Activated CD4-positive, alpha-beta T cell treated with anti-CD3 and anti-CD28 coated beads, Interleukin-2, amount 10 ng/mL, durations not matched to agents 24 days and 14 days (primary cell): ENCODE measurements at regions of chr2 and their contacts with region 1.

Region 1: DNA sequence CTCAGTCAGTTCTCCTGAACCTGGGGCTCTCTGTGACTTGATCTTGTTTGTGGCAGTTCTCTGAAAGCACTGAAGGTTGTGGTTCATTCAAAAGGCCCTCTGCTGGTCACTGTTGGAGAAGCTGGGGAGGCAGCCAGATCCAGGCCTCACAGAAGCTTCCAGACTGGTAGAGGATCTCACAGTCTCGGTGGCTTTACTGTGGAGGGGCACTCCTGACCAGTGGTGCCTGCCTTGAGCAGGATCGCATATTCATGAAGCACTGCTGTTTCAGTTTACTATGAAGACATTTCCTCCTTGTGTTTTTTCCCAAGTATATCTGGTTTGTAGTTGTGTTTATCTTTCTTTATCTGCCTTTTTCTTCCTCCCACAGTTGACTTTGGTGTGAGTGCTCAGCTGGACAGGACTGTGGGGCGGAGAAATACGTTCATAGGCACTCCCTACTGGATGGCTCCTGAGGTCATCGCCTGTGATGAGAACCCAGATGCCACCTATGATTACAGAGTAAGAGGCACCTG is 133.9 kb downstream of the MAP4K4 start:
- DNase-seq: peak; percentile 88
- H3K4me3 Mint-ChIP-seq: peak overlapping the region; percentile 50
- H3K27ac Mint-ChIP-seq: peak overlapping the region; percentile 91
- H3K4me1 Mint-ChIP-seq: peaks cover 58% of the 10 kb centered on the region
- H3K27me3 Mint-ChIP-seq: no peaks in the 10 kb centered on the region

Region 2: GRCh38 chr2:101341901-101342624 is 489.3 kb before region 1 on chr2:
- intact Hi-C with region 1: loop called (anchors 5 kb)
- DNase-seq: peak; percentile 91
- H3K4me3 Mint-ChIP-seq: no peak overlapping the region
- H3K27ac Mint-ChIP-seq: peak overlapping the region; percentile 52
- H3K4me1 Mint-ChIP-seq: peaks cover 26% of the 10 kb centered on the region
- H3K27me3 Mint-ChIP-seq: peaks cover 5% of the 10 kb centered on the region

Region 3: GRCh38 chr2:101473911-101474701 is 357.3 kb before region 1 on chr2:
- intact Hi-C with region 1: loop called (anchors 2 kb)
- DNase-seq: peak; percentile 88
- H3K4me3 Mint-ChIP-seq: peak overlapping the region; percentile 84
- H3K27ac Mint-ChIP-seq: peak overlapping the region; percentile 92
- H3K4me1 Mint-ChIP-seq: peaks cover 37% of the 10 kb centered on the region
- H3K27me3 Mint-ChIP-seq: no peaks in the 10 kb centered on the region

Region 4: GRCh38 chr2:101667823-101668222 is 163.6 kb before region 1 on chr2:
- intact Hi-C with region 1: no loop called
- DNase-seq: no peak
- H3K4me3 Mint-ChIP-seq: no peak overlapping the region
- H3K27ac Mint-ChIP-seq: no peak overlapping the region
- H3K4me1 Mint-ChIP-seq: no peaks in the 10 kb centered on the region
- H3K27me3 Mint-ChIP-seq: no peaks in the 10 kb centered on the region

Region 5: GRCh38 chr2:101704046-101704466 is 127.4 kb before region 1 on chr2:
- intact Hi-C with region 1: loop called (anchors 2 kb)
- DNase-seq: peak; percentile 80
- H3K4me3 Mint-ChIP-seq: peak overlapping the region; percentile 59
- H3K27ac Mint-ChIP-seq: peak overlapping the region; percentile 90
- H3K4me1 Mint-ChIP-seq: peaks cover 59% of the 10 kb centered on the region
- H3K27me3 Mint-ChIP-seq: no peaks in the 10 kb centered on the region

Region 6: DNA sequence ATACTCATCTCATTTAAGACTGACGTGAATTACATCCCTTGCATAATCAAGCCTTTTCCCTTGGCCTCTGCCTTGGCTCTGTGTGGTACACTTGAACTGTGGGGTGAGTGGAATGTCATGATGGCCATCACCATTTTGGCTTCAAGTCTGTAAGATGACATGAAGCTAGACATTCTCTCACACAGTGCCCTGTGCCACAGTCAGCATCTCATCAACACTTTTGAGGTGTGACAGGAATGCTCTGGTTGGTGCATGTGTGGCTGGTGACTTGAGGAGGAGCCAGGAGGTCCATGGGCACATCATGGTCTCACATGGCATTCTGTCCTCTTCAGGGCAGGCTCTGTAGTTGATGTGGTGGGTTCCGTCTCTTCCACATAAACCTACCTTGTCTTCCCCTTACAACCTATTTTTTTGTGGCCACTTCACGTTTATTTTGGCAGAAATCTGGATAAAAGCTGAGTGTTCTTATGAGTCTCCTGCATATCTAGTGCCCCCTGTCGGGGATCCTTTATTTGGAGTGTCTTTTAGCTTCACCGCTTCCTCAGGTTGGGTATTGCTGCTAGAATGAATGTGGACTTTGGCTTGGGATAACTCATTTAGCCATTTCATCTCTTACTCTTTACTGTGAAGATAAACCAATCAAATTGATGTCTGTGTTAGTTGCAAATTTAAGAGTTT is 105.8 kb before region 1 on chr2:
- intact Hi-C with region 1: no loop called
- DNase-seq: peak; percentile 66
- H3K4me3 Mint-ChIP-seq: no peak overlapping the region
- H3K27ac Mint-ChIP-seq: no peak overlapping the region
- H3K4me1 Mint-ChIP-seq: peaks cover 74% of the 10 kb centered on the region
- H3K27me3 Mint-ChIP-seq: no peaks in the 10 kb centered on the region

Region 7: DNA sequence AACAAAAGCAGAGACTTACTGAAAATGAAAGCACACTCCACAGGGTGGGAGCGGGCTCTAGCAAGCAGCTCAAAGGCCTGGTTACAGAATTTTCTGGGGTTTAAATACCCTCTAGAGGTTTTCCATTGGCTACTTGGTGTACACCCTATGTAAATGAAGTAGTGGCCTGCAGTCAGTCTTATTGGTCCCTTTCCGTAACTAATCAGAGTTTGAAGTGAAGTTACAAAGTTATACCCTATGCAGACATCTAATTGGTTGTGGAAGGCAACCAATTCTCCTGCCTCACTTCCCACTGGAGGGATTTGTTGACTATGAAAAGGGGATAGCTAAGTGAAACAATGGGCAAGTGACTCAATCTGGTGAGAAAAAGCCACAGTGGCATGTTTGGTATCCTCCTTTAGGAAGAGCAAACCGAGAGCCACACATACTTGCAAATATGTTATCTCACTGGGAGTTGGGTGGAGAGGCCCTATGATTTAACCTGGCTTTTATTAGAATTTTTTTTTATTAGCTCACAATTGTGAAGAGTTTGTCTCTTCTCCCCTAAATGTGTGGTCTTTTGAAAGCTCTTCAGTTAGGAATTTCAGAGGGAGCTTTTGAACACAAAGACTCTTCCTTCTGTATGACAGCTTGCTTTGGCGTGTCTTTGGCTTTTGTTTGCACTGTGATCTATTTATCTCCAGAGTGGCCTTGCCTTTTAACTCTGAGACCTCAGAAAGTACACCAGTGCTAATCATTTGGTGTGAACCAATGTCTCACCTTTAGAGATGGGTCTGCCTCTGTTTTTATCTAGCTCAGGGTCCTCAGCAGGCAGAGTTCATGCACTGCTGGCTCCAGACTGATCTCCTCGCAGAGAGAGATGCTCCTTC is 64.3 kb before region 1 on chr2:
- intact Hi-C with region 1: loop called (anchors 5 kb)
- DNase-seq: no peak
- H3K4me3 Mint-ChIP-seq: no peak overlapping the region
- H3K27ac Mint-ChIP-seq: no peak overlapping the region
- H3K4me1 Mint-ChIP-seq: peaks cover 53% of the 10 kb centered on the region
- H3K27me3 Mint-ChIP-seq: no peaks in the 10 kb centered on the region